ENCODE measurements at regions of chr15 and their contacts with region 1.

Region 1: GRCh38 chr15:64580696-64581407 is 120.5 kb downstream of the ZNF609 start:
- DNase-seq: no peak
- H3K4me3 ChIP-seq: no peak overlapping the region
- H3K27ac ChIP-seq: no peak overlapping the region
- H3K4me1 ChIP-seq: peaks cover 0 to 20% (median 9%) of the 10 kb centered on the region in 4 donors
- H3K27me3 ChIP-seq: no peaks in the 10 kb centered on the region
- CTCF ChIP-seq: no peak
- EP300 ChIP-seq: no peak
- POLR2A ChIP-seq: no peak

Region 2: DNA sequence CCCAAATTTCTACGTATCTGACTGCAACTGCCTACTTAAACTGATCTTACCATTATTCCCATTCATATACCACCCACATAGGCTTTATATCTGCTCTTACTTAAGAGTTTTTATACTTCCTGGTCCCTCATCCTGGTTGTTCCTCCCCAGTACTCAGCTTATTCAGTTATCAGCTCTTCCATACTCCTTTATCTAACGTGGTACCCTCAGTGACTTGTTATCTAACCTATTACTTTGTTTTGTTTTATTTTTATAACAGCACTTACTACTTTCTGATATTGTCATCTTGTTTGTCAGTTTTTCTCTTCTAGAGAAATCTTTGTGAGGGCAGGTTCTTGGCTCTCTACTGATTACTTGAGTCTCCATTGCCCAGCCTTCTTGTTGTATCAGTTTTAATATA is 19.9 kb before region 1 on chr15:
- intact Hi-C with region 1: loop called (anchors 2 kb)
- DNase-seq: no peak
- H3K4me3 ChIP-seq: no peak overlapping the region
- H3K27ac ChIP-seq: no peak overlapping the region
- H3K4me1 ChIP-seq: peaks cover 0 to 12% (median 8%) of the 10 kb centered on the region in 4 donors
- H3K27me3 ChIP-seq: no peaks in the 10 kb centered on the region
- CTCF ChIP-seq: no peak
- EP300 ChIP-seq: no peak
- POLR2A ChIP-seq: no peak